BJ (cell line): ENCODE measurements at regions of chr19 and their contacts with region 1.

Region 1: GRCh38 chr19:18865973-18866799 is 29.8 kb downstream of the CERS1 start:
- DNase-seq: no peak
- H3K4me3 ChIP-seq: no peak overlapping the region
- H3K27me3 ChIP-seq: no peaks in the 10 kb centered on the region
- CTCF ChIP-seq: peak; percentile 73

Region 2: GRCh38 chr19:18364826-18365528 is 501.2 kb before region 1 on chr19:
- CTCF ChIA-PET with region 1: no interaction called
- POLR2A ChIA-PET with region 1: no interaction called
- DNase-seq: peak; percentile 99
- H3K4me3 ChIP-seq: no peak overlapping the region
- H3K27me3 ChIP-seq: no peaks in the 10 kb centered on the region
- CTCF ChIP-seq: no peak

Region 3: DNA sequence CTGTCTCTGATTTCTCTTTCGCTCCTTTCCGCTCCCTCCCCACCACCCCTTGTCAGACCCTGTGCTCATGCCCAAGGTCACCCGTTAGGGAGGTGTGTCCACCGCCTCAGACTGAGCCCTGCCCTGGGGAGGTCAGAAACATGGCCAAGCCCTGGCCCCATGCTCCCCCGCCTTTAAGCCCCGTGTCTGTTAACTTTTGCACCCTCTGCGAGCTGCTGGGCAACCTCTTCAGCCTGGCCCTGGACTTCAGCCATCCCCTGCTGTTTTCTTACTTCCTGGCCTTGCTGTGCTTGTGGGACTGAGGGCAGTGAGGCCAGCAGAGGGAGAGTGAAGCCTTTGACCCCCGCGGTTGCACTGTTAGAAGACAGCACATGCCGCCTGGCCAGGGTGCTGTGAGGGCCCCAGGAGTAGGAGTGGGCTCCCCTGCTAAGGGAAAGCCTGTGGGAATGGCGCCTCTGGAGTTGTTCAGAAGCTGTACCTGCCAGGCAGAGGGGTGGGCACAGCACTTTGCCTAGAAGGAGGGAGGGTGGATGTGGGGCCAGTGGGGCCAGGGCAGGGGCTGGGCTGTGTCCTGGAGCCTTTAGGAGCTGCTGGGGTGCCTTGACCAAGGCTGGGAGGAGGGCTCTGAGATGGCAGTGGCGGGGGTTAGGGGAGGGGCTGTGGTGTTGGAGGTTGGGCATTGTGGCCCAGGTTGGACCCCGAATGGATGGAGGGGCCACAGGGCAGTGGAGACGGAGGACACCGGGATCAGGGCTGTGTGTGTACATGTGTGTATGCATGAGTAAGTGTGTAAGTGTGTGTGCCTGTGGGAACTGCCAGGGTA is 26.5 kb before region 1 on chr19:
- CTCF ChIA-PET with region 1: no interaction called
- POLR2A ChIA-PET with region 1: no interaction called
- DNase-seq: no peak
- H3K4me3 ChIP-seq: no peak overlapping the region
- H3K27me3 ChIP-seq: no peaks in the 10 kb centered on the region
- CTCF ChIP-seq: no peak

Region 4: GRCh38 chr19:18889949-18890745 is 24.0 kb after region 1 on chr19:
- CTCF ChIA-PET with region 1: interaction called, 11 read pairs
- POLR2A ChIA-PET with region 1: no interaction called
- DNase-seq: no peak
- H3K4me3 ChIP-seq: no peak overlapping the region
- H3K27me3 ChIP-seq: peaks cover 7% of the 10 kb centered on the region
- CTCF ChIP-seq: no peak

Region 5: GRCh38 chr19:18901491-18901890 is 35.3 kb after region 1 on chr19:
- CTCF ChIA-PET with region 1: no interaction called
- POLR2A ChIA-PET with region 1: no interaction called
- DNase-seq: no peak
- H3K4me3 ChIP-seq: no peak overlapping the region
- H3K27me3 ChIP-seq: no peaks in the 10 kb centered on the region
- CTCF ChIP-seq: no peak

Region 6: DNA sequence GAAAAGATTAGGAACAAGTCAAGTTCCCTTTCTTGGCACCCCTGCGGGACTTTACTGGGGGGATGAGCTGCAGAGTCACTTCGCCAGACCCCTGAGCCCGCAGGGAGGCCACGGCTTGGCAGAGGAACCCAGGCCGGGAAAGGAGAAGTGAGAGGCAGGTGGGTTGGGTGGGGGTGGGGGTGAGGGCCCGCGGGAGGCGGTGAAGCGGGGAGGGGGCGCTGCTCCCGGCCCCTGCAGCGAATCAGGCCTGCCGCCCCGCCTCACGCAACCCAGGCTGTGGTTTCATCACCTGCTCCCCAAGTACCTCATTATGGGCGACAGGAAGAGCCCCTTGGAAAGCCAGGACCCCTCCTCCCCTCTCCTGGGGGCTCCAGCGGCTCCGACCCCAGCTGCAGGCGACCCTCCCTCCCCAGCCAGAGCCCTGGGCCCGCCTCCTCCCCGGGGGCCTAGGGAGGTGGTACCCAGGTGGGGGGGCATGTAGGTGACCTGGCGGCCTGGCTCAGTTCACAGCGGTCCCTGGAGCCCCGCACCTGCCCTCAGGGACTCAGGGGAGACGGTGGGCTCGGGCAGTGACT is 294.4 kb after region 1 on chr19:
- CTCF ChIA-PET with region 1: no interaction called
- POLR2A ChIA-PET with region 1: no interaction called
- DNase-seq: no peak
- H3K4me3 ChIP-seq: no peak overlapping the region
- H3K27me3 ChIP-seq: no peaks in the 10 kb centered on the region
- CTCF ChIP-seq: no peak